ENCODE measurements at regions of chr20 and their contacts with region 1.

Region 1: GRCh38 chr20:39829256-39829655 is 859.8 kb downstream of the MAFB start:
- DNase-seq: no peak
- ATAC-seq: peak; percentile 39
- H3K4me3 ChIP-seq: no peak overlapping the region; the same call in 1 of the 2 replicates
- H3K27ac ChIP-seq: peak overlapping the region; percentile 68
- H3K4me1 ChIP-seq: peaks cover 36% of the 10 kb centered on the region
- H3K27me3 ChIP-seq: no peaks in the 10 kb centered on the region
- CTCF ChIP-seq: peak; percentile 32 to 38 (median 34); a peak in 4 of 6 replicates
- EP300 ChIP-seq: no peak
- POLR2A ChIP-seq: no peak
- RAD21 ChIP-seq: peak; percentile 33

Region 2: GRCh38 chr20:39751557-39752137 is 77.6 kb before region 1 on chr20:
- CTCF ChIA-PET with region 1: interaction called, 7 read pairs
- POLR2A ChIA-PET with region 1: interaction called, 4 read pairs
- RAD21 ChIA-PET with region 1: interaction called, 24 read pairs
- SMC1A ChIA-PET with region 1: interaction called, 27 read pairs
- in situ Hi-C with region 1: no loop called
- intact Hi-C with region 1: no loop called
- DNase-seq: peak; percentile 12
- ATAC-seq: peak; percentile 84
- H3K4me3 ChIP-seq: no peak overlapping the region
- H3K27ac ChIP-seq: no peak overlapping the region
- H3K4me1 ChIP-seq: no peaks in the 10 kb centered on the region
- H3K27me3 ChIP-seq: no peaks in the 10 kb centered on the region
- CTCF ChIP-seq: no peak
- EP300 ChIP-seq: peak; percentile 60 to 62; a peak in 3 of 4 replicates
- POLR2A ChIP-seq: no peak
- RAD21 ChIP-seq: no peak

Region 3: DNA sequence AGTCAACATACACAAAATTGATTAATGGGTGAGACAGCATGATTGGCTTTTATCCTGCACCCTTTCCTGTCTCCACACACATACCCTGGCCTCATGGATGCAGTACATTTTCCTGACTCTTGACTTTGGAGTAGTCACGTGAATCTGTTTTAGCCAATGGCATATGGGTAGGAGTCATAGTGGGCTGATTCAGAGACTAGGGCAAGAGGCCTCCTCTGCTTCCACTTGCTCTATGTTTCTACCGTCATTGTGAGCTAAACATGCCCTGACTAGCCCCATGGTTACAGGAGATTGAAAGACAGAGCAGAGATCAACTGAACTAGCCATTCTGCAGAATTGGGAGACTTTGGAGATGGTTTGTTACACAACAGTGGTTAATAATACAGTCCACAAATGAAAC is 17.1 kb before region 1 on chr20:
- CTCF ChIA-PET with region 1: interaction called, 6 read pairs
- POLR2A ChIA-PET with region 1: interaction called, 6 read pairs
- RAD21 ChIA-PET with region 1: interaction called, 9 read pairs
- SMC1A ChIA-PET with region 1: interaction called, 17 read pairs
- in situ Hi-C with region 1: no loop called
- intact Hi-C with region 1: no loop called
- DNase-seq: no peak
- ATAC-seq: peak; percentile 30; the same call in 1 of the 3 replicates
- H3K4me3 ChIP-seq: no peak overlapping the region
- H3K27ac ChIP-seq: no peak overlapping the region
- H3K4me1 ChIP-seq: no peaks in the 10 kb centered on the region
- H3K27me3 ChIP-seq: no peaks in the 10 kb centered on the region
- CTCF ChIP-seq: no peak
- EP300 ChIP-seq: no peak
- POLR2A ChIP-seq: no peak
- RAD21 ChIP-seq: no peak

Region 4: DNA sequence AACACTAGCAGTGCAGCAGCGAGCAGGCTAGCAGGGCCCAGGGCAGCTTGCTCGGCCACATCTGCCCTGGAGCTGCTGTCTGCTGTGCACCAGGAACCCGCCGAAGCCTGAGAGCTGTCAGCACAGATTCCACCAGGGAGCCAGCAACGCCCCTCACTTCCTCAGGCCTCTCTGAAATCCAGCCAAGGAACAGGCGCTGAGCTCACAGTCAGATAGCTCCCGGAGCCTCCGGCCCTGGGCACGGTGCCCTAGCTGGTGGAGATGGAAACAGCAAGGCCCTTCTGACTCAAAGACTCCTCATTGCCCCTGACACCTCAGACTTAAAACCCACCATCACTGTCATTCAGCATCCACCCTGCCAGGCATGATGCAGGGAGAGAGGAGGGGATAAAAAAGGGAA is 20.4 kb after region 1 on chr20:
- CTCF ChIA-PET with region 1: interaction called, 3 read pairs
- POLR2A ChIA-PET with region 1: interaction called, 6 read pairs
- RAD21 ChIA-PET with region 1: interaction called, 38 read pairs
- SMC1A ChIA-PET with region 1: interaction called, 67 read pairs
- in situ Hi-C with region 1: no loop called
- intact Hi-C with region 1: no loop called
- DNase-seq: no peak
- ATAC-seq: no peak
- H3K4me3 ChIP-seq: no peak overlapping the region
- H3K27ac ChIP-seq: no peak overlapping the region
- H3K4me1 ChIP-seq: no peaks in the 10 kb centered on the region; the same call in 1 of the 2 replicates
- H3K27me3 ChIP-seq: no peaks in the 10 kb centered on the region
- CTCF ChIP-seq: no peak
- EP300 ChIP-seq: no peak
- POLR2A ChIP-seq: no peak
- RAD21 ChIP-seq: no peak

Region 5: GRCh38 chr20:39885975-39886649 is 56.9 kb after region 1 on chr20:
- CTCF ChIA-PET with region 1: no interaction called
- POLR2A ChIA-PET with region 1: no interaction called
- RAD21 ChIA-PET with region 1: no interaction called
- SMC1A ChIA-PET with region 1: no interaction called
- in situ Hi-C with region 1: no loop called
- intact Hi-C with region 1: no loop called
- DNase-seq: no peak
- ATAC-seq: peak; percentile 88
- H3K4me3 ChIP-seq: no peak overlapping the region
- H3K27ac ChIP-seq: no peak overlapping the region
- H3K4me1 ChIP-seq: no peaks in the 10 kb centered on the region
- H3K27me3 ChIP-seq: no peaks in the 10 kb centered on the region
- CTCF ChIP-seq: peak; percentile 56 to 73 (median 70); a peak in 5 of 6 replicates
- EP300 ChIP-seq: no peak
- POLR2A ChIP-seq: no peak
- RAD21 ChIP-seq: peak; percentile 63